ENCODE measurements at regions of chr15 and their contacts with region 1.

Region 1: DNA sequence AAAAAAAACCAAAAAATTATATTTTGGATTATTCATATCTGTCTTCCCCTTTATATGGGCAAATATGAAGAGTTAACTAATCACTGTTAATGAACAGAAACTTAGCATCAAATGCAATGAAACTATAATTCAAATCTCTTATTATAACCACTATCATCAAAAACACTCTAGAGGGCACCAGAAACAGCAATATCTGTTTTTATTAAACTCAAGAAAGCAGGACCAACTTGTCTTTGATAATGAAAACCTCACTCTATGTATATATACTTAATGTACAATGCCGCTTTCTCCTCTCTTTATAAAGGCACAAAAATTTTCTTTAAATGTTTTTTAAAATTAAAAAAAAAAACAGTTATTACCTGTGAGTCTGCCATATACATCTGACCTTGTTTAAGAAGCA is 92.7 kb downstream of the UACA start:
- DNase-seq: no peak
- H3K4me3 ChIP-seq: no peak overlapping the region
- H3K27ac ChIP-seq: no peak overlapping the region
- H3K4me1 ChIP-seq: peaks cover 0 to 30% (median 9%) of the 10 kb centered on the region in 4 donors
- H3K27me3 ChIP-seq: no peaks in the 10 kb centered on the region
- CTCF ChIP-seq: no peak
- EP300 ChIP-seq: no peak
- POLR2A ChIP-seq: no peak

Region 2: GRCh38 chr15:70722266-70723121 is 51.8 kb after region 1 on chr15:
- intact Hi-C with region 1: loop called (anchors 10 kb)
- DNase-seq: peak in 1 of 2 donors; percentile 80
- H3K4me3 ChIP-seq: no peak overlapping the region
- H3K27ac ChIP-seq: no peak overlapping the region
- H3K4me1 ChIP-seq: peaks cover 1 to 61% (median 24%) of the 10 kb centered on the region in 4 donors
- H3K27me3 ChIP-seq: no peaks in the 10 kb centered on the region
- CTCF ChIP-seq: peak in 5 of 7 experiments; percentile 17 to 74 (median 60)
- EP300 ChIP-seq: no peak
- POLR2A ChIP-seq: no peak

Region 3: GRCh38 chr15:70815644-70816043 is 145.0 kb after region 1 on chr15:
- intact Hi-C with region 1: loop called (anchors 10 kb)
- DNase-seq: peak in 1 of 2 donors; percentile 38
- H3K4me3 ChIP-seq: no peak overlapping the region
- H3K27ac ChIP-seq: no peak overlapping the region
- H3K4me1 ChIP-seq: peaks cover 0 to 7% (median 4%) of the 10 kb centered on the region in 4 donors
- H3K27me3 ChIP-seq: no peaks in the 10 kb centered on the region
- CTCF ChIP-seq: no peak
- EP300 ChIP-seq: no peak
- POLR2A ChIP-seq: no peak